Pancreas (tissue), 10 donors: ENCODE measurements at regions of chr17 and their contacts with region 1.

Region 1: GRCh38 chr17:44159519-44160210 is 10.8 kb upstream of the ASB16 start:
- DNase-seq: no peak
- ATAC-seq: no peak
- H3K4me3 ChIP-seq: no peak overlapping the region
- H3K27ac ChIP-seq: no peak overlapping the region
- H3K4me1 ChIP-seq: no peaks in the 10 kb centered on the region
- H3K27me3 ChIP-seq: no peaks in the 10 kb centered on the region
- CTCF ChIP-seq: no peak

Region 2: GRCh38 chr17:43940630-43941029 is 219.0 kb before region 1 on chr17:
- intact Hi-C with region 1: loop called in 1 of 3 experiments (anchors 10 kb)
- DNase-seq: no peak
- ATAC-seq: peak in 2 of 4 donors; percentile 4 to 9
- H3K4me3 ChIP-seq: no peak overlapping the region
- H3K27ac ChIP-seq: no peak overlapping the region
- H3K4me1 ChIP-seq: no peaks in the 10 kb centered on the region
- H3K27me3 ChIP-seq: no peaks in the 10 kb centered on the region
- CTCF ChIP-seq: peak in 1 of 4 donors; percentile 10

Region 3: DNA sequence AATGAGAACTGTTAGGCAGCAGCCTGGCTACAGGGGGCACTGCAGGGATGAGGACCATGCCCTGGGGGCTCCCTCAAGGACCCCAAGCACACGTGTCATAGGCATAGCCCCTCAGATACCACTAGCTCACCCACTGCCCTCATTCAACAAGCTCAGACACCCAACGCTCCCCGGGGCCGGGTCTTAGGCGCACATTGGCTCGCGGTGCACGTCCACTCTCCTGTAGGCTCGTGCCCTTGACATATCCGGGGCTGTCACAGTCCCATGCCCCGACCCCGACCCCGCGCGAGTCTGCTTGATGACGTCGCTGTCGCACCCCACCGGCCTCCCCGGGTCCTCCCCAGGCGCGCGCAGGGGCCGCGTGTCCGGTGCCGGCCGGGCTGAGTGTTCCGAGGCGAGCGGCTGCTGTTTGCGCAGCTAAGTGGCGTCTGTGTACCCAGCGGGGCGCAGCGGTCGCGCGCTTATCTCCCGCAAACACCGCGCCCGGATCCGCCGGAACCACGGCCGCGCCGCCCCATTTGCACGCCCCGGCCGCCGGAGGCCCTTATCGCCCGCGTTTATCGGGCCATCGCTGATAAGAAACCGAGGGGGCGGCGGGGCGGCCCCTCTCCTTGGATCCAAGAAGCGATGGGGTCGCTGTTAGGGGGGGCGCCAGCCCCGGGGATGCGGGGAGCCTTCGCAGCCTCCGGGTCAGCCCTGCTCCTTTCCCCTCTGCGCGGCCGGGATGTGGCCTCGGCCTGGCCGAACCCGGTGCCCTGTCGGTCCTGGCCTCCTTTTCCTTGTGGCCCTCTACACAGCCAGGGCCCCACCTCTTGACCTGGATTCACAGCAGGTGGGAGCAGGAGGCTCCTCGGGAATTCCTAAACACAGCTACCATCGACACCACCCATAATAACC is 175.9 kb before region 1 on chr17:
- intact Hi-C with region 1: no loop called
- DNase-seq: peak in 5 of 6 donors; percentile 14 to 86 (median 42)
- ATAC-seq: peak; percentile 74 to 91 (median 86)
- H3K4me3 ChIP-seq: peak overlapping the region; percentile 7 to 49 (median 22)
- H3K27ac ChIP-seq: no peak overlapping the region
- H3K4me1 ChIP-seq: peaks cover 0 to 5% (median 0%) of the 10 kb centered on the region in 3 donors
- H3K27me3 ChIP-seq: peaks cover 0 to 9% (median 0%) of the 10 kb centered on the region in 4 donors
- CTCF ChIP-seq: no peak

Region 4: DNA sequence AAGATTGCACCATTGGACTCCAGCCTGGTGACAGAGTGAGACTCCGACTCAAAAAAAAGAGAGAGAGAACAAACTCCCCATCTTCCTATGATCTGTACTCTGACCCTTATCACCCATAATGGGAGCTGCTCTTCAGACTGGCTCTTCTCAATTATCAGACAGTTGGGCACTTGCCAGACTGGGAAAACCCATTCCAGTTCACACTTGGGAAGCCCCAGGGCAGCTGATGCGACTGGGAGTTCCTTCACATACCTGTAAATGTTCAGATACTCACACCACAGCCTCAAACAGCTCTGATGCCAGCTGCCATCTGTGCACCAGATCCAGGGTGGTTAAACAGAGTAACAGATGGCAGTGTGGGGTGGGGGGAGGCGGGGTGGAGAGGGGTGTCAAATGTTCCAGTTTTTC is 121.1 kb before region 1 on chr17:
- intact Hi-C with region 1: no loop called
- DNase-seq: no peak
- ATAC-seq: no peak
- H3K4me3 ChIP-seq: no peak overlapping the region
- H3K27ac ChIP-seq: no peak overlapping the region
- H3K4me1 ChIP-seq: peaks cover 0 to 6% (median 0%) of the 10 kb centered on the region in 3 donors
- H3K27me3 ChIP-seq: no peaks in the 10 kb centered on the region
- CTCF ChIP-seq: no peak